ENCODE measurements at regions of chr17 and their contacts with region 1.

Region 1: GRCh38 chr17:78970834-78971773 is 8.6 kb downstream of the LGALS3BP start:
- H3K4me3 ChIP-seq: no peak overlapping the region
- H3K27ac ChIP-seq: no peak overlapping the region
- H3K4me1 ChIP-seq: peaks cover 5% of the 10 kb centered on the region
- CTCF ChIP-seq: peak; percentile 96

Region 2: DNA sequence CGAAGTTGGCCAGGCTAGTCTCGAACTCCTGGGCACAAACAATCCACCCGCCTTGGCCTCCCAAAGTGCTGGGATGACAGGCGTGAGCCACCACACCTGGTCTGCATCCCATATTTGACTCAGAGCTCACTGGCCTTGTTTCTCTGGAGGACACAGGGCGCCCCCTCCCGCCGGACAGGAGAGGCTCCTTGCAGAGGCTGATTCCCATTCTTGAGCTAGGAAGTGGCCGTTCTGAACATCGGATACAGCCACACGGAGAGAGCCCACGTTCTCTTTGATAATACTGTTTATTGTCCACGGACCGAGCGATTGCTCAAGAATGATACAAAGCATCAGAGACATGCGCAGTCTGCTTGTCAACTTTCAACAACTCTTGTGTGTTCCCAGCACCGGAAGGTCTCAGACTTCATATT is 118.4 kb before region 1 on chr17:
- CTCF ChIA-PET with region 1: interaction called, 16 read pairs
- POLR2A ChIA-PET with region 1: interaction called, 4 read pairs
- H3K4me3 ChIP-seq: no peak overlapping the region
- H3K27ac ChIP-seq: no peak overlapping the region; the same call in 1 of the 2 replicates
- H3K4me1 ChIP-seq: peaks cover 13% of the 10 kb centered on the region
- CTCF ChIP-seq: no peak

Region 3: DNA sequence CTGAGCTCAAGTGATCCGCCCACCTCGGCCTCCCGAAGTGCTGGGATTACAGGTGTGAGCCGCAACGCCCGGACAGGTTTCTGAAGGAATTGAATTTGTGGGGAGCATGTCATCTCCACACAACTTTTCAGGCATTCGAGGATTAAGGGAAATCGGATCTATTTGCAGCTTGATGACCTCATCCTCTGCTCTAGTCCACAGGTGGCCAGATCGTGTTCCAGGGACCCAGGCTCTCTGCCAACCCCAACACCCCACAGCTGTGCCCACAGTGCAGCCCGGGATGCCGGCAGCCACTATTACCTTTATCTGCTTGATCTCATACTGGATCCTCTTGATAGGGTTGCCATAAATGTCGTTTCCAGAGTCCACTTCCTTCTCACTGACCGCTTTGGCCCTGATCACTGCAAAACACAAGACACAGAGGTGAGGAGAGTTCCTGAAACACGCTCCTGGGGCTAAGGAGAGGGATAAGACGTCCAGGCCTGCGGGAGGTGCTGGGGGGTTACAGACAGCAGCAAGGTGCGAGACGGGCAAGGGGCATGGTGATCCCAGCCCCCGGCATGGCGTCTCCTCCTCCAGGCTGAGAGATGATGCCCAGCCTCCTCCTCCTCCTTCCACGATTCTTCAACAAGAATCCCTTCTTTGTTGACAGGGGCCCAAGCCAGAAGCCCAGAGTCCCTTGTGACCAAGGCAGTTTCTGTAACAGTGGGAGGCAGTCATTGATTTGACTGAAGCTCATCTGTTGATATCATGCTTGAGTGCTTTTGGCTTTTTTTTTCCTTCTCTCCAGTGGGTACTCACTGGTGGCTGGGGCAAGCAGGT is 97.4 kb before region 1 on chr17:
- CTCF ChIA-PET with region 1: interaction called, 15 read pairs
- POLR2A ChIA-PET with region 1: no interaction called
- H3K4me3 ChIP-seq: no peak overlapping the region
- H3K27ac ChIP-seq: peak overlapping the region; percentile 40
- H3K4me1 ChIP-seq: peaks cover 12% of the 10 kb centered on the region
- CTCF ChIP-seq: no peak

Region 4: DNA sequence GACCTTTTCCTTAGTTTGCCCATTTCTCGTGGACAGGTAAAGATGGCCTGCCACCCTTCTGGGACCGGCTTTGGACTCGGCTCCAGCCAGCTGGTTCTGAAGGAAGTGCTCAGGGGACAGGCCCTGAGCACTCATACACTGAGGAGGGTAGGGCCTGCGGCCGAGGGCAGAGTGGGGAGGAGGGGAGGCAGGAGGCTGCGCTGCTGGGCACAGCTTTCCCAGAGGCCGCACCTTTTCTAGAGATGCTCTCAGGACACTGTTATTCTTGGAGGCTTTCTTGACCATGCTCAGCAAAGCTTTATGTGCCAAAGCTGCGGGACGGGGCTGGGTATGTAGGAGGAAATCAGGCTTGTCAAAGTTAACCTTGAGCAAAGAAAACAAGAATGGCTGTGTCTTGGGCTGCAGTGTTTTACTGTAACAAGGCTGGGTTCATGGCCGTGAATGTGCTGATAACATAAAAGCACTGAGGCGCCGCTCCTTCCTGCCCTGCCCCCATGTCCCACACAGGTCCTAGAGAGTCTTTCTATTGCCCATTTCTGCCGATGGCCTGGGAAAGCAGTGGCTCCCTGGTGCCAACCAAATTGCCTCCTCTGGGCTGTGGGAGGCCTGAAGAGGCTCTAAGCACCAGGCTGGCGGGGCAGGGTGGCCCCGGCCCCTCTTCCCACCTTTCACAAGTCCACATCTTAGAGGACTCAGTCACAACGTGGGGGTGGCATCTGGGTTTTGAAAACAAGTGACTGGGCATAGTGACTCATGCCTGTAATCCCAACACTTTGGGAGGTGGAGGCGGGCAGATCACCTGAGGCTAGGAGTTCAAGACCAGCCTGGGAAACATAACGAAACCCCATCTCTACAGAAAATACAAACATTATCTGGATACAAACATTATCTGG is 23.6 kb before region 1 on chr17:
- CTCF ChIA-PET with region 1: interaction called, 11 read pairs
- POLR2A ChIA-PET with region 1: no interaction called
- H3K4me3 ChIP-seq: no peak overlapping the region
- H3K27ac ChIP-seq: no peak overlapping the region
- H3K4me1 ChIP-seq: no peaks in the 10 kb centered on the region; the same call in 1 of the 2 replicates
- CTCF ChIP-seq: no peak

Region 5: GRCh38 chr17:78986048-78986648 is 15.0 kb after region 1 on chr17:
- CTCF ChIA-PET with region 1: interaction called, 24 read pairs
- POLR2A ChIA-PET with region 1: no interaction called
- H3K4me3 ChIP-seq: no peak overlapping the region
- H3K27ac ChIP-seq: no peak overlapping the region
- H3K4me1 ChIP-seq: peaks cover 7% of the 10 kb centered on the region; the same call in 1 of the 2 replicates
- CTCF ChIP-seq: peak; percentile 34; the same call in 1 of the 2 replicates

Region 6: GRCh38 chr17:79005063-79005861 is 34.2 kb after region 1 on chr17:
- CTCF ChIA-PET with region 1: no interaction called
- POLR2A ChIA-PET with region 1: no interaction called
- H3K4me3 ChIP-seq: no peak overlapping the region
- H3K27ac ChIP-seq: peak overlapping the region; percentile 37; the same call in 1 of the 2 replicates
- H3K4me1 ChIP-seq: peaks cover 17% of the 10 kb centered on the region
- CTCF ChIP-seq: no peak

Measured in HEK293 (cell line).